ENCODE measurements at regions of chr9 and their contacts with region 1.

Region 1: DNA sequence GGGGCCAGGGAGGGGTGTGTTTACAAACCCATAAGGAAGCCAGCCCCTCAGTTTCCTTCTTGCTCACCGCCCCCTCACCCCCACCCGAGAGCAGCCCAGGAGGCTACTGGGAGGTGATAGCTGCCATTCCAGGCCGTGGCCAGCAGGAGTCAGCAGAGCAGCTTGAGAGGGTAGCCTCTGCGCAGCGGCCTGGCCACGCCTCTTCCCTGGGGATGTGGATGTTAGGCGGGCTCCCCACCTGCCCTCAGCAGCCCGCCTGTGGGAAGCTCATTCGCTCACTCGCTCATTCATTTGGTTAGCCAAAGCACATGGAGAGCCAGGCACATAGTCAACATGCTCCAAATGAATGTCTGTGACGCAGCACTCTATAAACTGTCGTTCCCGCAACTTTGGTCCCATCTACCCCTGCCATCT is 6.1 kb upstream of the DPM2 start:
- DNase-seq: no peak
- H3K4me3 ChIP-seq: no peak overlapping the region
- CTCF ChIP-seq: peak; percentile 98

Region 2: GRCh38 chr9:127955294-127956035 is 11.7 kb after region 1 on chr9:
- CTCF ChIA-PET with region 1: interaction called, 226 read pairs
- POLR2A ChIA-PET with region 1: interaction called, 3 read pairs
- DNase-seq: no peak
- H3K4me3 ChIP-seq: no peak overlapping the region
- CTCF ChIP-seq: no peak

Region 3: GRCh38 chr9:128001779-128002298 is 58.1 kb after region 1 on chr9:
- CTCF ChIA-PET with region 1: interaction called, 17 read pairs
- POLR2A ChIA-PET with region 1: no interaction called
- DNase-seq: peak; percentile 64
- H3K4me3 ChIP-seq: no peak overlapping the region
- CTCF ChIP-seq: no peak

Region 4: DNA sequence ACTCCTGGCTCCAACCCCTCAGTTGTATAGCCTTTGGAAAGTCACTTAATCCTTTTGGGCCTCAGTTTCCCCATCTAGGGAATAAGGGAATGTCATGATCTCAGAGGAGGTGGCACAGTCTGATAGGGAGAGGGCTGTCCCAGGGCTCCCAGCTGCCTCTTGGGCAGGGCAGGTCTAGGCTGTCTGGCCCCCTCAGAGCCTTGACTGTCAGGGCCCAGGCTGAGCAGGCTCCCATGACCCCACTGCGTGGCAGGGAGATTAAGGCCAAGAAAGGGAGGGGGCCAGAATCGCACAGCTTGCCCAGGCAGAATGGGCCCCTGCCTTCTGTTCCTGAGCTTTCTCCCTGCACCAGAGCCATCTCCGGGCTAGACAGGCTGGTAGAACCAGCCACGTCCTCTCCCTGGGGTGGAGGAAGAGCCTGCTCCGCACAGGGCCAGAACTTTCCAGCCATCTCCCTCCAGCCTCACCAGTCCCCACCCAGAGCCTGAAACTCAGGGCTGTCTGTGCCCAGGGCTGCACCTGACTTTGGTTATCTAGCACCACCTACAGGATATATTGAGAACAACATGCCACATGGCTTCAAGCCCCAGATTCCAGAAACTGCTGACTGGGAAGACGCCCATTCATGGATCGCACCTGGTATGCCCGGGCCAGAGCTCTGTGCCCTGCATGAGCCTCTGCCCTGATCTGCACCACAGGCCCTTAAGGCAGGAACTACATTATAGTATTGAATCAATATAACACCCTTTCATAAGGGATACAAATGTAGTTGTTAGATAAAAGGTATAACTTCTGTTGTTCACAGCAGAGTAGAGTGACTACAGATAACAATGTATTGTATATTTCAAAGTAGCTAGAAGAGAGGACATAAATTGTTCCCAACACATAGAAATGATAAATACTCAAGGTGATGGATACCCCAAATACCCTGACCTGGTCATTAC is 91.4 kb after region 1 on chr9:
- CTCF ChIA-PET with region 1: interaction called, 173 read pairs
- POLR2A ChIA-PET with region 1: no interaction called
- DNase-seq: no peak
- H3K4me3 ChIP-seq: no peak overlapping the region
- CTCF ChIP-seq: peak; percentile 66

Region 5: GRCh38 chr9:128088253-128088945 is 144.7 kb after region 1 on chr9:
- CTCF ChIA-PET with region 1: interaction called, 131 read pairs
- POLR2A ChIA-PET with region 1: no interaction called
- DNase-seq: no peak
- H3K4me3 ChIP-seq: no peak overlapping the region
- CTCF ChIP-seq: no peak

Region 6: GRCh38 chr9:128117613-128118471 is 174.1 kb after region 1 on chr9:
- CTCF ChIA-PET with region 1: interaction called, 149 read pairs
- POLR2A ChIA-PET with region 1: no interaction called
- DNase-seq: no peak
- H3K4me3 ChIP-seq: peak overlapping the region; percentile 12; the same call in 1 of the 2 replicates
- CTCF ChIP-seq: peak; percentile 100

Region 7: DNA sequence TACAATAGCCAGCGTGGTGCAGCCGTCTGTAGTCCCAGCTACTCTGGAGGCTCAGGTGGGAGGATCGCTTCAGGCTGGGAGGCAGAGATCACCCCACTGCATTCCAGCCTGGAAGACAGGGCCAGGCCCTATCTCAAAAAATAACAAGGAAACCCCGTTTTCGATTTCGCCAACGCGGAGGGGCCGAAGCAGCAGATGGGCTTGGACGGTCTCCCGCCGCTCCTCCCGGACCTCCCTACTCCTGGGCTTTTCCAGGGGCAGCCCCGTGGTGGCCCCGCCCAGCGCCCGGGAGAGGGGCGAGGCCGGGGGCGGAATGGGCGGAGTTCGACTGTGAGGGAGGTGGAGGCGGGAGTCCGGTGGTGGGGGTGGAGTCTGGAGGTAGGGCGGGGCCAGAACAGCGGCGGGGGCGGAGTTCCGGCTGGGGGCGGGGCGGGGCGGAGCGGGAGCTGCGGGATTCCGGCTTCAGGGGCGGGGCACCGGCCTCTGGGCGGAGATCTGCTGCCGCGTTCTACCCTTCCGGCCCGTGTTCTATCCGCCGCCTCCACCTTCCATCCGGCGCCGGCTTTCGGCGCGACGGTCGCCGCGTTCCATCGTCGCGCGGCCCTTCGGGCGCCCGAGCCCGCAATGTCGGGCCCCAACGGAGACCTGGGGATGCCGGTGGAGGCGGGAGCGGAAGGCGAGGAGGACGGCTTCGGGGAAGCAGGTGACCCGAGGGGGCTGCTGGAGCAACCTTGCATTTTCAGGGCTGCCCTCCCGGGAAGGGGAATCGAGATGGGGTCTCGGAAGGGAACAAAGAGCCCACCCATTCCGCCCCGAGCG is 216.3 kb after region 1 on chr9 and contains the start of gene BBLN:
- CTCF ChIA-PET with region 1: no interaction called
- POLR2A ChIA-PET with region 1: no interaction called
- DNase-seq: peak; percentile 17
- H3K4me3 ChIP-seq: peak within 1 kb of the TSS; percentile 81
- CTCF ChIP-seq: no peak

Measured in AG04449 (cell line).